Activated CD4-positive, alpha-beta memory T cell treated with anti-CD3 and anti-CD28 coated beads, Interleukin-2, amount 10 ng/mL, durations not matched to agents 7 days and 5 days (primary cell): ENCODE measurements at regions of chr19 and their contacts with region 1.

Region 1: GRCh38 chr19:8505680-8506401 is 3.4 kb upstream of the PRAM1 start:
- DNase-seq: peak; percentile 64
- H3K4me3 Mint-ChIP-seq: peak overlapping the region; percentile 77
- H3K27ac Mint-ChIP-seq: peak overlapping the region; percentile 61
- H3K4me1 Mint-ChIP-seq: peaks cover 22% of the 10 kb centered on the region
- H3K27me3 Mint-ChIP-seq: no peaks in the 10 kb centered on the region

Region 2: GRCh38 chr19:8412783-8413628 is 92.8 kb before region 1 on chr19 and contains the start of gene MARCHF2:
- CTCF ChIA-PET with region 1: interaction called, 13 read pairs
- POLR2A ChIA-PET with region 1: no interaction called
- DNase-seq: peak; percentile 98
- H3K4me3 Mint-ChIP-seq: peak within 1 kb of the TSS; percentile 58
- H3K27ac Mint-ChIP-seq: no peak within 1 kb of the TSS
- H3K4me1 Mint-ChIP-seq: peaks cover 10% of the 10 kb centered on the region
- H3K27me3 Mint-ChIP-seq: no peaks in the 10 kb centered on the region
- total RNA-seq, gene MARCHF2: 20.6 to 20.8 TPM

Region 3: GRCh38 chr19:8487137-8487851 is 18.5 kb before region 1 on chr19:
- CTCF ChIA-PET with region 1: interaction called, 11 read pairs
- POLR2A ChIA-PET with region 1: interaction called, 8 read pairs
- DNase-seq: peak; percentile 69
- H3K4me3 Mint-ChIP-seq: no peak overlapping the region
- H3K27ac Mint-ChIP-seq: peak overlapping the region; percentile 86
- H3K4me1 Mint-ChIP-seq: peaks cover 31% of the 10 kb centered on the region
- H3K27me3 Mint-ChIP-seq: no peaks in the 10 kb centered on the region

Region 4: GRCh38 chr19:8585057-8585893 is 79.4 kb after region 1 on chr19:
- CTCF ChIA-PET with region 1: no interaction called
- POLR2A ChIA-PET with region 1: no interaction called
- DNase-seq: no peak
- H3K4me3 Mint-ChIP-seq: no peak overlapping the region
- H3K27ac Mint-ChIP-seq: no peak overlapping the region
- H3K4me1 Mint-ChIP-seq: peaks cover 7% of the 10 kb centered on the region
- H3K27me3 Mint-ChIP-seq: no peaks in the 10 kb centered on the region